ENCODE measurements at regions of chr6 and their contacts with region 1.

Region 1: DNA sequence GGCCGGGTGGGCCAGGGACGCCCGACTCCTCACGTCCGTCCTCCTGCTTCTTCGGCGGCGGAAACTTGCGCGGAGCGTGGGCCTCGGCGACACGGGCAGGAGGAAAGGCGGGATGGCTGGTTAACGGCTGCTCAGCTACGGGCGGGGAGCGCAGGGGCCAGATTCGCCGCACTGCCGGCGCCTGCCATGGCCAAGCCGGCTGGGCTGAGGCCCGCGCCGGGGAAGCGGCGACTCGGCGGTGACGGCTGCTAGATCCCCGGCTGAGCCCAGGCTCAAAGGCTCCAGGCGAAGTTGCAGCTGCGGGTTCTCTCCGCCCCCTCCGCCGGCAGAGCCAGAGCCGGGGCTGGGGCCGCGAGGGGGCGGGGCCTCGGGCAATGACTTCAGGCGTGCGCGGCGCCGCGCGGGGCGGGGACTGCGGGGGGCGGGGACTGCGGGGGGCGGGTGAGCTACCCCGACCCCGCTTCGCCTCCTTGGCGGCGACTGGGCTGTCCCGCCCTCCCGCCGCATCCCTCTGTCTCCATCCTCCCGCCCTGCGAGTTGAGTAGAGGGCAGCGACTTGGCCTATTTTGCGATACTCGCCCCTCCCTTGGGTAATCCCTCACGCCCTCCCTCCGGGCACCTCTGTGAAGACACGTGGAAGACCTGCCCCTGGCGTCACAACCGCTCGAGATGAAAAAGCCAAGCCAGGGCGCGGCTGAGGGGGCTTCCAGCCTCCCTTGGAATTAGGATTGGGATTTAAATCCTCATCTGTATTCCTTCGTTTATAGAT is at the start of gene CEP85L:
- DNase-seq: peak; percentile 90
- H3K4me3 Mint-ChIP-seq: peak within 1 kb of the TSS; percentile 85
- H3K27ac Mint-ChIP-seq: peak within 1 kb of the TSS; percentile 71
- H3K4me1 Mint-ChIP-seq: peaks cover 6% of the 10 kb centered on the region
- H3K27me3 Mint-ChIP-seq: no peaks in the 10 kb centered on the region
- CTCF ChIP-seq: no peak
- total RNA-seq, gene CEP85L: 8.4 and 10.0 TPM in 2 replicates

Region 2: GRCh38 chr6:118551063-118552053 is 100.1 kb before region 1 on chr6:
- CTCF ChIA-PET with region 1: no interaction called
- POLR2A ChIA-PET with region 1: no interaction called
- intact Hi-C with region 1: no loop called
- DNase-seq: peak; percentile 56
- H3K4me3 Mint-ChIP-seq: no peak overlapping the region
- H3K27ac Mint-ChIP-seq: no peak overlapping the region
- H3K4me1 Mint-ChIP-seq: peaks cover 12% of the 10 kb centered on the region
- H3K27me3 Mint-ChIP-seq: no peaks in the 10 kb centered on the region
- CTCF ChIP-seq: peak; percentile 59

Region 3: DNA sequence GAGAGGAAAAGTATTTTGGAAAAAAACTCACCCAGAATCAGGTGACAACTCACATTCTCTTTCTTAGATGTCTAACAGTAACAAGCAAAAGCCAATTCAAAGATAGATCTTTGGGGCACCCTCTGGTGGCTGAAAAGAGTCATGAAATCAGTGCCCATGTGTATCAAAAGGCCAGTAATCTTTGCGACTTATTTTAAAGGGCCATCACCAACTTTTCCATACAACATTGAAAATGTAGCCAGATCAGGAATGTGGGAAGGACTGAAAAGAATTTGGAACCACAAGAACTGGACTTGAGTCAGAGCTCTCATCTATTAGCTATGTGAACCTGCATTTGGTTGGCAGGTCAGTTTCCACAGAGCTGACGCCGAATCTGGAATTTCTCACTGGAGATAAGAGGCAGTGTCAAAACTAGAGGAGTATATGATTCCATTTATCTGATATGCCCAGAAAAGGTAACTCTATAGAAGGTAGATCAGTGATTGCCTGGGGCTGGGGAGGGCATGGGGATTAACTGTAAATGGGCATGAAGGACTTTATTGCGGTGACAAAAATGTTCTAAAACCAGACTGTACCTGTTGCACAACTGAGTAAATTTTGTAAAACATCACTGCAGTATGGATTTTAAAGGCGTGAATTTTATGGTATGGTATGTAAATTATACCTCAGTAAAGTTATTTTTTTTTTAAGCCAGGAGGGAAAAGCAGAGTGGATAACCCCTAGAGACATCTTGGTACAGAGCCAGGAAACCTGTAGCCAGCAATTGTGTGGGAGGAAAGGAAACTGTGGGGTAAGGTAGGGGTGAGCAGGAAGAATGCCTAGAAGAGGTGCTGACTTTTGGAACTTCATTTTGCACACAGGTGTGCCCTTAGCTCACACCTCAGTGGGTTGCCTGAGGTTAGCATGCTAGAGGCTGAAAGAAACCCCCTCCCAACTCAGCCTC is 125.4 kb after region 1 on chr6:
- CTCF ChIA-PET with region 1: interaction called, 3 read pairs
- POLR2A ChIA-PET with region 1: interaction called, 3 read pairs
- intact Hi-C with region 1: loop called (anchors 1 kb)
- DNase-seq: peak; percentile 85
- H3K4me3 Mint-ChIP-seq: peak overlapping the region; percentile 49
- H3K27ac Mint-ChIP-seq: no peak overlapping the region
- H3K4me1 Mint-ChIP-seq: peaks cover 13% of the 10 kb centered on the region
- H3K27me3 Mint-ChIP-seq: no peaks in the 10 kb centered on the region
- CTCF ChIP-seq: peak; percentile 51

Region 4: DNA sequence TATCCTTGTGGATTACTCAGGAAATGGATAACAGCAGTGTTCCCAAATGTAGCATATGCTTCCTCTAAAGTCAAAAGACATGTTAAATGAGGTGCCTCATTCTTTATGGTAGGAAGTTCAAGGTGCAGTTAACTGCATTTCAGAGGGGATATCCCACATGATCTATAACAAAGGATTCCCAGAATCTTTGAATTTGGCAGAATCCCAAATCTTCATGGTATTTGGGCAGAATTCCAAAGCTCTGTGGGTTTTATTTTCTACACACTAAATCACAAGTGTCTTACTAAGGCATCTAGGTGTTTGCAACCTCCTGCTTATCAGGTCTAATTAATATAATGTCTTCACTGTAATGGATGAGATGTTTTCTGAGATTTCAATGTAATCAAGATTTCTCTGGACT is 1062.4 kb after region 1 on chr6:
- CTCF ChIA-PET with region 1: no interaction called
- POLR2A ChIA-PET with region 1: no interaction called
- intact Hi-C with region 1: no loop called
- DNase-seq: peak; percentile 29
- H3K4me3 Mint-ChIP-seq: no peak overlapping the region
- H3K27ac Mint-ChIP-seq: no peak overlapping the region
- H3K4me1 Mint-ChIP-seq: no peaks in the 10 kb centered on the region
- H3K27me3 Mint-ChIP-seq: no peaks in the 10 kb centered on the region
- CTCF ChIP-seq: no peak